ENCODE measurements at regions of chr4 and their contacts with region 1.

Region 1: GRCh38 chr4:87270144-87270543 is 49.7 kb upstream of the KLHL8 start:
- DNase-seq: peak; percentile 16 to 53 (median 30)
- ATAC-seq: peak; percentile 91
- H3K4me3 ChIP-seq: no peak overlapping the region
- H3K27ac ChIP-seq: no peak overlapping the region
- H3K4me1 ChIP-seq: no peaks in the 10 kb centered on the region
- H3K27me3 ChIP-seq: peaks cover 7 to 16% of the 10 kb centered on the region in 2 experiments
- CTCF ChIP-seq: peak; percentile 52 to 81 (median 69)
- EP300 ChIP-seq: no peak
- POLR2A ChIP-seq: no peak
- RAD21 ChIP-seq: peak; percentile 75 to 84

Region 2: GRCh38 chr4:87365343-87365742 is 95.2 kb after region 1 on chr4:
- CTCF ChIA-PET with region 1: no interaction called
- POLR2A ChIA-PET with region 1: no interaction called
- in situ Hi-C with region 1: no loop called
- intact Hi-C with region 1: loop called (anchors 5 kb)
- DNase-seq: no peak
- ATAC-seq: no peak
- H3K4me3 ChIP-seq: no peak overlapping the region
- H3K27ac ChIP-seq: no peak overlapping the region
- H3K4me1 ChIP-seq: no peaks in the 10 kb centered on the region
- H3K27me3 ChIP-seq: no peaks in the 10 kb centered on the region
- CTCF ChIP-seq: no peak
- EP300 ChIP-seq: no peak
- POLR2A ChIP-seq: no peak
- RAD21 ChIP-seq: no peak